ENCODE measurements at regions of chr2 and their contacts with region 1.

Region 1: GRCh38 chr2:41414486-41415230 is 633.2 kb upstream of the PKDCC start:
- DNase-seq: no peak
- ATAC-seq: peak; percentile 51; the same call in 1 of the 2 replicates
- H3K4me3 ChIP-seq: no peak overlapping the region
- H3K27ac ChIP-seq: no peak overlapping the region
- H3K4me1 ChIP-seq: no peaks in the 10 kb centered on the region
- H3K27me3 ChIP-seq: no peaks in the 10 kb centered on the region
- CTCF ChIP-seq: peak; percentile 58

Region 2: GRCh38 chr2:41698678-41699422 is 284.2 kb after region 1 on chr2:
- CTCF ChIA-PET with region 1: interaction called, 3 read pairs
- POLR2A ChIA-PET with region 1: no interaction called
- in situ Hi-C with region 1: no loop called
- intact Hi-C with region 1: loop called (anchors 10 kb)
- DNase-seq: no peak
- ATAC-seq: peak; percentile 77; the same call in 1 of the 2 replicates
- H3K4me3 ChIP-seq: peak overlapping the region in 1 of 2 experiments; percentile 2; a peak in 1 of 4 replicates
- H3K27ac ChIP-seq: no peak overlapping the region
- H3K4me1 ChIP-seq: no peaks in the 10 kb centered on the region
- H3K27me3 ChIP-seq: no peaks in the 10 kb centered on the region
- CTCF ChIP-seq: peak; percentile 91

Region 3: GRCh38 chr2:41782306-41783158 is 367.9 kb after region 1 on chr2:
- CTCF ChIA-PET with region 1: no interaction called
- POLR2A ChIA-PET with region 1: no interaction called
- in situ Hi-C with region 1: no loop called
- intact Hi-C with region 1: loop called (anchors 10 kb)
- DNase-seq: peak; percentile 33
- ATAC-seq: no peak
- H3K4me3 ChIP-seq: no peak overlapping the region
- H3K27ac ChIP-seq: no peak overlapping the region
- H3K4me1 ChIP-seq: no peaks in the 10 kb centered on the region
- H3K27me3 ChIP-seq: peaks cover 5% of the 10 kb centered on the region; the same call in 1 of the 2 replicates
- CTCF ChIP-seq: peak; percentile 81

Measured in Panc1 (cell line).